ENCODE measurements at regions of chr4 and their contacts with region 1.

Region 1: GRCh38 chr4:121823505-121824170 is at the start of gene CCNA2:
- DNase-seq: peak; percentile 83
- ATAC-seq: peak; percentile 94
- H3K4me3 ChIP-seq: peak within 1 kb of the TSS; percentile 100
- H3K27ac ChIP-seq: peak within 1 kb of the TSS; percentile 89
- H3K4me1 ChIP-seq: no peaks in the 10 kb centered on the region
- H3K27me3 ChIP-seq: no peaks in the 10 kb centered on the region
- CTCF ChIP-seq: peak in 1 of 3 experiments; percentile 4; a peak in 1 of 6 replicates
- EP300 ChIP-seq: no peak
- POLR2A ChIP-seq: peak; percentile 95
- RAD21 ChIP-seq: no peak
- polyA plus RNA-seq, gene CCNA2: 21.8 to 34.7 TPM

Region 2: GRCh38 chr4:121800961-121801714 is 22.5 kb before region 1 on chr4 and contains the start of gene EXOSC9:
- CTCF ChIA-PET with region 1: interaction called, 7 read pairs
- POLR2A ChIA-PET with region 1: interaction called, 8 read pairs
- RAD21 ChIA-PET with region 1: interaction called, 8 read pairs
- SMC1A ChIA-PET with region 1: interaction called, 6 read pairs
- in situ Hi-C with region 1: no loop called
- intact Hi-C with region 1: loop called (anchors 1 kb)
- DNase-seq: peak; percentile 88
- ATAC-seq: peak; percentile 86
- H3K4me3 ChIP-seq: peak within 1 kb of the TSS; percentile 79
- H3K27ac ChIP-seq: peak within 1 kb of the TSS; percentile 94
- H3K4me1 ChIP-seq: peaks cover 19% of the 10 kb centered on the region
- H3K27me3 ChIP-seq: no peaks in the 10 kb centered on the region
- CTCF ChIP-seq: no peak
- EP300 ChIP-seq: peak; percentile 22 to 30; a peak in 2 of 4 replicates
- POLR2A ChIP-seq: peak; percentile 84
- RAD21 ChIP-seq: no peak
- polyA plus RNA-seq, gene EXOSC9: 115 to 131 TPM

Region 3: DNA sequence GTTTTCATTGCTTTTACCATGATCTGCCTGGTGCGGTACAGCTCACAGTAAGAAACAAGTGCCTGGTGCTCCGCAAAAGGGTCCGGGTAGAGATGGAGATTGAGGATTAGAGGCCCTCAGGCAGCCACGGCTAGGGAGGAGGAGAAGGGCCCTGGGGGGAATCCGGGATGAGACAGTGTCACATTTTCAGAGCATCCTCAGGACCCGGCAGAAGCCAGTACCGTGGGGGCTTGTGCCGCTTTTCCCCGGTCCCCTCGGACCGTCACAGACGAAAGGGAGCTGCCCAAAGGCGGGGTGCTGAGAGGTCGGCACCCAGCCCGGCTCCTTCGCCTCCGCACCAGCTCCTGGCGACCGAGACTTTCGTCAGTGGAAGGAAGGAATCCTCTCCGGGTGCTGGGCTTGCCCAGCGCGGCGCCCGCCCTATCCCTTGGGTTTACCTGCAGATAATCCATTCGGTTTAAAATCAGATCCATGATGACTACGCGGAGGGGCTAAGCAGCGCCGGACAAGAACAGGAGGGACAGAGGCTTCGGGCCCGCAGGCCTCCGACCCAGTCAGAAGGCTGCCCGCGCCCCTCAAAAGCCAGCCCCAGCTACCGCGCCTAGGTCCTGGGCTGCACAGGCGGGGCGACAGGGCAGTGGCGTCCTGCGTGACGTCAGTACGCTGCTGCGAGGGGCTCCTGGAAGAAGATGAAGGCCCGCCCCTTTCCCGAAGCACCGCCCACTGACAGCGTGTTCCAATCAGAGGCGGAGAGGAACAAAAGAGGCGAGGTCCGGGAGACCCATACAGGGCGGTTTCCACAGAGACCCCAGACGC is 46.4 kb after region 1 on chr4 and contains the start of gene BBS7:
- CTCF ChIA-PET with region 1: interaction called, 5 read pairs
- POLR2A ChIA-PET with region 1: interaction called, 16 read pairs
- RAD21 ChIA-PET with region 1: interaction called, 10 read pairs
- SMC1A ChIA-PET with region 1: interaction called, 7 read pairs
- in situ Hi-C with region 1: no loop called
- intact Hi-C with region 1: no loop called
- DNase-seq: peak; percentile 81
- ATAC-seq: peak; percentile 99
- H3K4me3 ChIP-seq: peak within 1 kb of the TSS; percentile 83
- H3K27ac ChIP-seq: peak within 1 kb of the TSS; percentile 42; the same call in 1 of the 2 replicates
- H3K4me1 ChIP-seq: no peaks in the 10 kb centered on the region
- H3K27me3 ChIP-seq: no peaks in the 10 kb centered on the region
- CTCF ChIP-seq: no peak
- EP300 ChIP-seq: no peak
- POLR2A ChIP-seq: peak; percentile 88
- RAD21 ChIP-seq: no peak
- polyA plus RNA-seq, gene BBS7: 7.4 to 8.8 TPM

Region 4: GRCh38 chr4:122073617-122074016 is 250.0 kb after region 1 on chr4:
- CTCF ChIA-PET with region 1: no interaction called
- POLR2A ChIA-PET with region 1: no interaction called
- RAD21 ChIA-PET with region 1: no interaction called
- SMC1A ChIA-PET with region 1: no interaction called
- in situ Hi-C with region 1: no loop called
- intact Hi-C with region 1: no loop called
- DNase-seq: no peak
- ATAC-seq: no peak
- H3K4me3 ChIP-seq: no peak overlapping the region
- H3K27ac ChIP-seq: no peak overlapping the region
- H3K4me1 ChIP-seq: no peaks in the 10 kb centered on the region
- H3K27me3 ChIP-seq: no peaks in the 10 kb centered on the region
- CTCF ChIP-seq: no peak
- EP300 ChIP-seq: no peak
- POLR2A ChIP-seq: no peak
- RAD21 ChIP-seq: no peak